ENCODE measurements at regions of chr11 and their contacts with region 1.

Region 1: GRCh38 chr11:60615497-60615896 is 83.9 kb upstream of the MS4A8 start:
- DNase-seq: no peak
- ATAC-seq: no peak
- H3K4me3 Mint-ChIP-seq: no peak overlapping the region
- H3K27ac Mint-ChIP-seq: no peak overlapping the region
- H3K4me1 Mint-ChIP-seq: no peaks in the 10 kb centered on the region
- H3K27me3 Mint-ChIP-seq: peaks cover 8% of the 10 kb centered on the region

Region 2: DNA sequence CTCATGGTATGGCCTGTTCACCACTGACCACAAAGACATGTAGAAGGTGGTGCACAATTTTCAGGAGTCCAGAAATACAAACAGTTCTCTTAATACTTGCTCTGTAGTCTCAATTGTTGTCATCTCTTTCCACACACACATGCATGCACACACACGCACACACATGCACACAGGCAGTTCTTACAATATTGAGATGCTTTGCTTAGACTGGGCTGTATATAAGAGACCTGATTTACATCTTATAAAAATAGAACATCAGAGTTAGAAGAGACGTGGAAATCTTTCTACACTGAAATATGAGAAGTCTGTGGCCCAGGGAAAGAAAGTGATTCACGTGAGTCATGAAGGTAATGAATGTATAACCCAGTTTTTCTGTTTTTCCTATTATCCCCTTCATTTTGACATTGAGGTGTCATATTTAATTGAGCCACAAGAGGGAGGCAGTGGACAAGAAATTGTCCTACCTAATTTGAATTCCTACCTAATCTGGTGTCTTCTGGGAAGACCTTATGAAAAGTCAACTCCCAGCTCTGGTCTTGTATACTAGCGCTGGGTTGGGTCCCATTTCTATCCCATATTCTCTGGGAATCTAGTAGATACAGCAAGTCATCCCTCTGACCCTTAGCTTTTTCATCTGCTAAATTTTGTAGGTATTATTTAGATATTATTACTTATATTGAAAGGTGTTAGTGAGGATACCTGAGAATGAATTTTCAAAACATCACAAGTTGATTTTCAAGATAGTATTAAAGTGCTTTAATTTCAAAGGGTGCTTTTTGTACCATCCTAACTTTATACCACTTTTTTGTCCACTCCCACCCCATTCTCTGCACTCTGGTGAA is 349.9 kb before region 1 on chr11:
- CTCF ChIA-PET with region 1: interaction called, 8 read pairs
- POLR2A ChIA-PET with region 1: no interaction called
- intact Hi-C with region 1: loop called (anchors 1 kb)
- DNase-seq: peak; percentile 26
- ATAC-seq: peak; percentile 55
- H3K4me3 Mint-ChIP-seq: no peak overlapping the region
- H3K27ac Mint-ChIP-seq: no peak overlapping the region
- H3K4me1 Mint-ChIP-seq: no peaks in the 10 kb centered on the region
- H3K27me3 Mint-ChIP-seq: peaks cover 20% of the 10 kb centered on the region

Region 3: DNA sequence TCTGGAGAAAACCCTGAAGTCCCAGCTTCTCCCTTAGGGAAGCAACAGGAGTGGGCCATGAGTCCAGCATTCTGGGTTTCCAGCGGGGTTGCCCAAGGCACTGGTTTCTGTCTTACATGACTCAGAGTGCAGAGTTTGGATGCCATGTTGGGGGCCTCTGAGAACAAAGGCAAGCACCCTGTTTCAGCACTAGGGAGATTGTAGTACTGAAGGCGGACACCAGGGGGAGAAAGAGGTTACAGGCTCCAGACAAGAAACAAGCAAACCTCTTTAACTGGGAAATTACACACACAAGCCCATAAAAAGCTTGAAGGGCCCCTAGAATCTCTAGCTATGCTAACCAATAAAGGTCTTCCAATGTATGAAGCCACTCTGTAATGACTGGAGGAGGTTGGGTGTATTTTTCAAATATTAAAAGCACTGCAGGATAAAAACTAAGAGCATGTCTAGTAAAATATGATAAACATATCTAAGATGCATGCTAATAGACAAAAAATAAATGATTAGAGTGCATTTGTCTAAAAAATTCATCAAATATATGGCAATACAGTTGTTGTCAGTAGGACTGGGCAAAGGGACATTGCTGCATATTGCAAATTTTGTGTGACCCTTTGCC is 281.4 kb before region 1 on chr11:
- CTCF ChIA-PET with region 1: interaction called, 4 read pairs
- POLR2A ChIA-PET with region 1: no interaction called
- intact Hi-C with region 1: loop called in 1 of 2 experiments (anchors 1 kb)
- DNase-seq: peak; percentile 85
- ATAC-seq: peak; percentile 86
- H3K4me3 Mint-ChIP-seq: no peak overlapping the region
- H3K27ac Mint-ChIP-seq: no peak overlapping the region
- H3K4me1 Mint-ChIP-seq: peaks cover 2% of the 10 kb centered on the region
- H3K27me3 Mint-ChIP-seq: peaks cover 16% of the 10 kb centered on the region

Region 4: GRCh38 chr11:60345489-60345888 is 270.0 kb before region 1 on chr11:
- CTCF ChIA-PET with region 1: interaction called, 8 read pairs
- POLR2A ChIA-PET with region 1: no interaction called
- intact Hi-C with region 1: loop called (anchors 1 kb)
- DNase-seq: peak; percentile 65
- ATAC-seq: no peak
- H3K4me3 Mint-ChIP-seq: no peak overlapping the region
- H3K27ac Mint-ChIP-seq: no peak overlapping the region
- H3K4me1 Mint-ChIP-seq: no peaks in the 10 kb centered on the region
- H3K27me3 Mint-ChIP-seq: peaks cover 25% of the 10 kb centered on the region

Region 5: DNA sequence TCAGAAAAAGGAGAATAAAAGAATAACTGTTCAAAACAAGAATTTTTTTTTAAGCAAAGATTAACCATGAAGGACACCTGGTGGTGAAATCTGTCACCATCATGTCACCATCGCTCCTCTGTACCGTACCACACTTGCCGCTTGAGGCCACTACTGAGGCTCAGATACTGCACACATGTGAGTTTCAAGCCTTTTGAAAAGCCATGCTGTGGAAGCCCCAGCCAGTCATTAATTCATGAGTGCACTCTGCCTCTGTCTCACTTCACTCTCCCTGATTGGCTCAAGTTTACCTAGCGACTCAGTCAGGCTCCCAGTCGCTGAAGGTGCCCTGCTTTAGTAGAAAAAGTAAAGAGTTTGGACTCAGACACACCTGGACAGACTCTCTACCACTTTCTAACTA is 129.5 kb before region 1 on chr11:
- CTCF ChIA-PET with region 1: no interaction called
- POLR2A ChIA-PET with region 1: no interaction called
- intact Hi-C with region 1: loop called in 1 of 2 experiments (anchors 1 kb)
- DNase-seq: peak; percentile 46
- ATAC-seq: peak; percentile 74
- H3K4me3 Mint-ChIP-seq: no peak overlapping the region
- H3K27ac Mint-ChIP-seq: no peak overlapping the region
- H3K4me1 Mint-ChIP-seq: peaks cover 3% of the 10 kb centered on the region
- H3K27me3 Mint-ChIP-seq: peaks cover 2% of the 10 kb centered on the region

Region 6: DNA sequence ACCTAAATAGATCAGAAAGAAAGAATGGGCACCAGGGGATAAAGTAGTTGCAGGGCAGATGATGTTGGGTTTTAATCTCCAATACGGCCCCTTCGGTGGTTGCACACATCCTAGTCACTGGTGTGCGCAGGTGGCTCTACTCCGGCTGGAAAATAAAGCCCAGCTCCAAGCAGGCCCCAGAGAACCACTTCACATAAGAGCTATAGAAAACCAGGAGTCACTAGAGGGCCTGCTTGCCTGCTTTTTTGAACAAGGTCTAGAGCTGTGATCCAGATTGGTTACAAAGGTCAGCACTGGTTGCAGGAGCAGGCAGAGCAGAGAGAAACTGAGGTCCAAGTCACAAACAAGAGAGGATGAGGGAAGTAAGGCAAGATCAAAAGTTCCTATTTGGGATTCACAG is 42.4 kb after region 1 on chr11:
- CTCF ChIA-PET with region 1: no interaction called
- POLR2A ChIA-PET with region 1: no interaction called
- intact Hi-C with region 1: no loop called
- DNase-seq: no peak
- ATAC-seq: no peak
- H3K4me3 Mint-ChIP-seq: no peak overlapping the region
- H3K27ac Mint-ChIP-seq: no peak overlapping the region
- H3K4me1 Mint-ChIP-seq: no peaks in the 10 kb centered on the region
- H3K27me3 Mint-ChIP-seq: peaks cover 12% of the 10 kb centered on the region

Region 7: DNA sequence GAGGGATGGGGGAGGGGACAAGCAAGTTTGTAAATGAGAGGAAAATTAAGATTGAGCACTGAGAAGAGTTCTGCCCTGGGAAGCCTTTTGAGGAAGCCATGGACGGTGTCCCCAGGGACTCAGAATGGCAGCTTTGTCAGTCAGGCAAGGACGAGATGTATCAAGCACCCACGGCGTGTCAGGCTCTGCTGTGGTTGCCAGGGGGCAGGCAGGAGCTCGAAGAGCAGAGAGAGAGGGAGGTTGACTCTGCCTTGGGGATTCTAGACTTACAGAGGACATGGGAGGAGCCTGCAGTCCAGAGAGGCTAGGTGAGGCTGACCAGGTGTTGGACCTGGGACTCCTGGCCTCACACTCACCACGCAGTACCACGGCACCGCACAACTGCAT is 994.5 kb after region 1 on chr11:
- CTCF ChIA-PET with region 1: no interaction called
- POLR2A ChIA-PET with region 1: no interaction called
- intact Hi-C with region 1: no loop called
- DNase-seq: no peak
- ATAC-seq: no peak
- H3K4me3 Mint-ChIP-seq: no peak overlapping the region
- H3K27ac Mint-ChIP-seq: no peak overlapping the region
- H3K4me1 Mint-ChIP-seq: no peaks in the 10 kb centered on the region
- H3K27me3 Mint-ChIP-seq: peaks cover 15% of the 10 kb centered on the region

Measured in activated CD4-positive, alpha-beta T cell treated with anti-CD3 and anti-CD28 coated beads for 36 hours (primary cell).